GM23248 (cell line): ENCODE measurements at regions of chr14 and their contacts with region 1.

Region 1: GRCh38 chr14:91164685-91165084 is 50.8 kb downstream of the DGLUCY start:
- DNase-seq: peak; percentile 23
- H3K4me3 ChIP-seq: no peak overlapping the region
- H3K27ac ChIP-seq: no peak overlapping the region
- H3K4me1 ChIP-seq: no peaks in the 10 kb centered on the region
- H3K27me3 ChIP-seq: no peaks in the 10 kb centered on the region

Region 2: DNA sequence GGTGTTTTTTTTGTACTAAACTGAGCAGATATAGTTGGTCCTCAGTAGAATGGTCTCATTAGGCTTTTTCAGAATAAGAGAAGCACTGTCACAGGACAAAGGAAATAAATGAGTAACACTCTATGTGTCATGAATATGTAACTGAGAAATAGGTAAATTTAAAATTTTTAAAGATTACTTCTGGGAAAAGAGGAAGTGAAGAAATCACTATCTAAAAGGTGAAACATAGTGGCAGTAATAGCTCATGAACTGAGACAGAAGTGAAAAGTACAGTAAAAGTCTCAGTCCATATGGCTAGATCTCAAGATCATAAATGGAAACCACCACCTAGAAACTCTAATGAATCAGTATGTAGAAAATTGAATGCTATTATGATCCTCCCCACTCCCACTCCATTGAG is 259.2 kb before region 1 on chr14:
- in situ Hi-C with region 1: loop called (anchors 5 kb)
- DNase-seq: no peak
- H3K4me3 ChIP-seq: no peak overlapping the region
- H3K27ac ChIP-seq: no peak overlapping the region
- H3K4me1 ChIP-seq: no peaks in the 10 kb centered on the region
- H3K27me3 ChIP-seq: no peaks in the 10 kb centered on the region